ENCODE measurements at regions of chr20 and their contacts with region 1.

Region 1: DNA sequence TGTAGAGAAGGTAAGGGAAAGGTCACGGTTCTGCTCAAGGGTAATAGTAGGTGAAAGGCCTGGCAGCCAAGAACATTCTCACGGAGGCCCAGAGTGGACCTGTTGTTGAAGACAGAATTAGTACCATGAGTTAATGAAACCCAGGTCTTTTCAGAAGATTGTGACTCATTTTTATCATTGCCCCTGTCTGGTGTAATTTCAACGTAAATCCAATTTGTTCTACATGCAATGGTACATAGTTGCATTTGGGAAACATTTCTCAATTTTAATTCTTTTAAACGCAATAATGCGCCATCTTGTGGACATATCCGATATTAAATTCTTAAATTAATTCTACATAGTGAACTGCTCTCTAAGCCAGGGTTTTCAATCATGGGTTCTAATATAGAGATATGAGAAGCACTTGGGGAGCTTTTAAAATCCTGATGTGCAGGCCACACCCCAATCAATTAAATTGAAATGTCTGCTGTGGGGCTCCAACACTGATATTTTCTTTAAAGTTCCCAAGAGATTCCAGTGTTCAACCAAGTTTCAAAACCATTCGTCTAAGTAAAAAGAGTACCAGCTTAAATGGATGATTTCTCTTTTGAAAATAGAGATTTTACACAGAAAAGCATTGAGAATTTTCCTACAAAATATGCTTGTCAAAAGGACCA is 257.4 kb downstream of the PLCB1 start:
- H3K4me3 Mint-ChIP-seq: no peak overlapping the region
- H3K27ac Mint-ChIP-seq: no peak overlapping the region
- H3K4me1 Mint-ChIP-seq: peaks cover 5% of the 10 kb centered on the region
- H3K27me3 Mint-ChIP-seq: no peaks in the 10 kb centered on the region

Region 2: GRCh38 chr20:8043687-8044282 is 345.7 kb before region 1 on chr20:
- intact Hi-C with region 1: loop called (anchors 2 kb)
- H3K4me3 Mint-ChIP-seq: no peak overlapping the region
- H3K27ac Mint-ChIP-seq: no peak overlapping the region
- H3K4me1 Mint-ChIP-seq: no peaks in the 10 kb centered on the region
- H3K27me3 Mint-ChIP-seq: no peaks in the 10 kb centered on the region

Measured in dendritic cell treated with granulocyte-macrophage colony-stimulating factor and Interleukin-4, amounts not matched to agents 40 ng/mL and 50 ng/mL, for 4 days (primary cell).